Heart left ventricle (tissue), 16 donors: ENCODE measurements at regions of chr1 and their contacts with region 1.

Region 1: DNA sequence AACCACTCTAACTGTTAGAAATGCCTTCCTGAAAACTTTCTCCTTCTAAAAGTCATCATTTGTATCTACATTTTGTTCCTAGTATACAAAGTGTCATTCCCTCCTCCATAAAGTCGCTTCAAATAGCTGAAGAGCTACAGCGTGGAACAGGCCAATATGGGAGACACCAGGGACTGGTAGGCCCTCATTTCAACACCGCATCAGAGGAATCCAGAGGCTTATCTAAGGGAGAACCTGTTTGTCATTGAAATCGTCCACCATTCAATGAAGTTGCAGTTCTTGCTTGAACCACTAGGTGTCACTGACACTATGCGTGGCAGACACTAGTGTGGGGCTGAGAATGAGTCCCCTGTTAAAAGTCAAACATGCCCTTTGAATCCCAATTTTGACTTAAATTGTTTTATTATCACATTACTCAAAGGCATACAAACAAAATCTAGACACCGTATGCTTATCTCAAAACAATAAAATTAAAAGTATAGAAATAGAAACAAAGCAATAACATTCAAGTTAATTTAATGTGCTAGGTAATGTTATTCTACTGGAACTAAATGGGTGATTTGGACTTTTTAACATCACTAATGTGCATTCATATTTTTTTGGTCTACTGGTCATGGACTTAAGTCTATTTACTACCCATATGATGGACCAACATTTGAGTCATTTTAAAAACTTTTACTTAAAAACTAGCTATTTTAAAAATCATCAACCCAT is 182.3 kb downstream of the FCRL5 start:
- DNase-seq: no peak
- ATAC-seq: peak in 2 of 4 donors; percentile 71 to 76
- H3K4me3 ChIP-seq: no peak overlapping the region
- H3K27ac ChIP-seq: no peak overlapping the region
- H3K4me1 ChIP-seq: no peaks in the 10 kb centered on the region
- H3K27me3 ChIP-seq: peaks cover 0 to 6% (median 0%) of the 10 kb centered on the region in 9 donors
- CTCF ChIP-seq: peak; percentile 80 to 94 (median 90)
- POLR2A ChIP-seq: no peak

Region 2: GRCh38 chr1:157193702-157194391 is 176.1 kb before region 1 on chr1:
- intact Hi-C with region 1: loop called in 2 of 10 experiments (anchors 10 kb)
- DNase-seq: peak in 2 of 5 donors; percentile 32 to 43
- ATAC-seq: no peak
- H3K4me3 ChIP-seq: no peak overlapping the region
- H3K27ac ChIP-seq: no peak overlapping the region
- H3K4me1 ChIP-seq: peaks cover 0 to 15% (median 0%) of the 10 kb centered on the region in 12 donors
- H3K27me3 ChIP-seq: peaks cover 15 to 68% (median 26%) of the 10 kb centered on the region in 9 donors
- CTCF ChIP-seq: peak; percentile 32 to 72 (median 52)
- POLR2A ChIP-seq: no peak